ENCODE measurements at regions of chr9 and their contacts with region 1.

Region 1: DNA sequence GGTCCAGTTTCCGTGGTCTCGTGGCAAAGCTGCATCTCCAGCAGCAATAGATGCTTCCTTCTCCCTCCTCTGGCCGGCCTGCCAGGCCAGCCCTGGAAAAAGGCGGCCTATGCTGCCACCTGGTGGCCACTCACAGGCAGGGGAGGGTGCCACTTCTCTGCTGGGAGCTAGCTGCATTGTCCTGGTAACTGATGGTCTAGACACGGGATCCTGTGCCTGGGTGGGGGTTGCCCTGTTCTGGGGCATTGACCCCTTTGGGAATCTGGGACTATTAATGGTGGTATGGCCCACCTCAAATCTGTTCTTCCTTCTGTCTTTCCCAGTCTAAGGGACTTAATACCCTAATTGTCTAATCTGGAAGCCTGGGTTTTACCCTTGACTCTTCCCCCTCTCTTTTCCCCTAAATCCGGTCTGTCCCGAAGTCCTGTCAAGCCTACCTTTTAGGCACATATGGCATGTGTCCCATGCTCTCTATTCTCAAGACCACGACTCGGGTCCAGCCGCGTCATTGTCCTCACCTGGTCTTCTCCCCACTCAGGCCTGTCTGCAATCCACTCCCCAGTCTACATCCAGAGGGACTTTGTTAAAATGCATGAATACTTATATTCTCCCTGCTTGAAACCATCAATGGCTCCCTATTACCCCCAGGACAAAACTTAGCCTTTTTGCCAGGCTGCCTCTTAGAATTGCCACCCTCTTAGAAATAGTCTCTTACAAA is 20.0 kb upstream of the PTGS1 start:
- DNase-seq: peak; percentile 65
- ATAC-seq: peak; percentile 91
- H3K4me3 ChIP-seq: no peak overlapping the region
- H3K27ac ChIP-seq: no peak overlapping the region
- H3K4me1 ChIP-seq: peaks cover 6% of the 10 kb centered on the region
- H3K27me3 ChIP-seq: no peaks in the 10 kb centered on the region
- CTCF ChIP-seq: peak; percentile 99
- POLR2A ChIP-seq: 0 out of 2 replicates have a peak, but pooled peaks have one; percentile 42
- RAD21 ChIP-seq: peak; percentile 99

Region 2: GRCh38 chr9:122092611-122093506 is 257.9 kb before region 1 on chr9 and contains the start of gene TTLL11:
- CTCF ChIA-PET with region 1: interaction called, 19 read pairs
- POLR2A ChIA-PET with region 1: no interaction called
- dilution Hi-C with region 1: no loop called
- in situ Hi-C with region 1: loop called (anchors 10 kb)
- intact Hi-C with region 1: loop called (anchors 1 kb)
- DNase-seq: peak; percentile 91
- ATAC-seq: peak; percentile 89
- H3K4me3 ChIP-seq: peak within 1 kb of the TSS; percentile 56
- H3K27ac ChIP-seq: peak within 1 kb of the TSS; percentile 46
- H3K4me1 ChIP-seq: peaks cover 9% of the 10 kb centered on the region
- H3K27me3 ChIP-seq: no peaks in the 10 kb centered on the region; the same call in none of the 2 replicates
- CTCF ChIP-seq: no peak
- POLR2A ChIP-seq: no peak
- RAD21 ChIP-seq: no peak
- total RNA-seq, gene TTLL11: 2.0 and 2.5 TPM in 2 replicates

Region 3: GRCh38 chr9:122125158-122125508 is 225.7 kb before region 1 on chr9:
- CTCF ChIA-PET with region 1: interaction called, 43 read pairs
- POLR2A ChIA-PET with region 1: interaction called, 5 read pairs
- dilution Hi-C with region 1: no loop called
- in situ Hi-C with region 1: loop called (anchors 5 kb)
- intact Hi-C with region 1: loop called (anchors 1 kb)
- DNase-seq: peak; percentile 76
- ATAC-seq: peak; percentile 79
- H3K4me3 ChIP-seq: no peak overlapping the region
- H3K27ac ChIP-seq: no peak overlapping the region
- H3K4me1 ChIP-seq: peaks cover 13% of the 10 kb centered on the region
- H3K27me3 ChIP-seq: no peaks in the 10 kb centered on the region; the same call in 1 of the 2 replicates
- CTCF ChIP-seq: peak; percentile 99
- POLR2A ChIP-seq: peak; percentile 70; the same call in 1 of the 2 replicates
- RAD21 ChIP-seq: peak; percentile 99

Region 4: DNA sequence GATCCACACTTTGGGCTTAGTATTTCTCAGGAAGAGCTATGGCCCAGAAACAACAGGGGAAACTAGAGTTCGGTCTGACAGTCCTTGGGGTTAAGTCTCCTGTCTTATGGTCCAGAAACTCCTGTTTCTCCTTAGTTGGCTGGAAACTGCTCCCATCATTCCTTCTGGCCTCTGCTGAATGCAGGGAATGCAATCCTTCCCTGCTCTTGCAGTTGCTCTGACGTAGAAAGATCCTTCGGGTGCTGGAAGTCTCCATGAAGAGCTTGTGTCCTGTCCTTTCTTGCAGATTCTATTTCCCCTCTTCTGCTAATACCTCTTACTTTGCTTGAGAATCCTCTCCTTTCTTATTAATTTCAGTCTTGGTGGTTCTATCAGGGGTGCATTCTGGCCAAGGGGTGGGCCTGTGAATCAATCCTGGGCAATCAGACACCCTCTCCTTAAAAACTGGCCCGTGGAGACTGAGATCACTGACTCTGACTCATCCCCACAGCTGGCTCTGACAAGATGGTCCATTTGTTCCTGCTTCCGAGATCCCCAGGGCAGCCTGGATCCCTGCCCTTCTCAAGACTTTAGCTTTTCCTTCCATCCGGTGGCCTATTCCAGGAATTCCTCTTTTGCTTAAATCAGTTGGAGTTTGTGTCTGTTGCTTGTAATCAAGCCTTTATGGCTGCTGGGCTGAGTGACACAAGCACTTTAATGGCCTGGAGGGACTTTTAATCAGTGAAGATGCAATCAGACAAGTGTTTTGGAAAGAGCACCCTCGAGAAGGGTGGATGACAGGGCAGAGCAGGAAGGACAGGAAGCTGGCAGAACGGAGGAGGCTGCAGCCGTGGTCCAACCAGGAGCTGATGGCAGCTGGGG is 43.7 kb after region 1 on chr9:
- CTCF ChIA-PET with region 1: interaction called, 4 read pairs
- POLR2A ChIA-PET with region 1: no interaction called
- dilution Hi-C with region 1: no loop called
- in situ Hi-C with region 1: no loop called
- intact Hi-C with region 1: loop called (anchors 1 kb)
- DNase-seq: peak; percentile 95
- ATAC-seq: peak; percentile 87
- H3K4me3 ChIP-seq: no peak overlapping the region
- H3K27ac ChIP-seq: peak overlapping the region; percentile 84
- H3K4me1 ChIP-seq: peaks cover 19% of the 10 kb centered on the region
- H3K27me3 ChIP-seq: no peaks in the 10 kb centered on the region
- CTCF ChIP-seq: no peak
- POLR2A ChIP-seq: no peak; the same call in 1 of the 2 replicates
- RAD21 ChIP-seq: no peak

Region 5: DNA sequence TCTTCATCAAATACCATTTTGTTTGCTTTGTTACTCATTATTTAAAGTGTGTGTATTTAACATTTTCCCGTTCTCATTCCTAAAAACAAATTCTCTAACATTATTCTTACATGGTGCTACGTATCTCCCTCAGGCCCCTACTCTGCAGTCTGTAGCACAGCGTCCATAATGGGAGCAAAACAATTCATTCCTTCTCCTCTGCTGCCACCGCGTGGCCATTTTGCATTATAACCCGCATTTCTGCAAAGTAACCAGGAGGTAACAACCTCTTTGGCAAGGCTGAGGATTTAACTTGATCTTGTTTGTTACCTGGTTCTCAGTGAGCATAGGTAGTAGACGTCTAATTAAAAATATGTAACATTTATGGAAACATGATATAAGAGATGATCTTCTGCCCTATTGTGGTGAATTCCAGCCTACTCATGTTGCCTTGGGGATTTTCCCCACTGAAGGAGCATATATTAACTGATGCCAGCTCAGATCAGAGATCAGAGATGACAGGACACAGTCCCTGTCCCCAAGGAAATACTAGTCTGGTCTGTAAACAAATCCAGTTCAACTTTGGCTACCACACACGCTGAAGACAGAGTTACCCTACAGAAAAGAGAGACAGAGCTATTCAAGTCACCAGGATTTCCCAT is 459.6 kb after region 1 on chr9:
- CTCF ChIA-PET with region 1: interaction called, 3 read pairs
- POLR2A ChIA-PET with region 1: no interaction called
- dilution Hi-C with region 1: no loop called
- in situ Hi-C with region 1: no loop called
- intact Hi-C with region 1: loop called (anchors 1 kb)
- DNase-seq: peak; percentile 74
- ATAC-seq: peak; percentile 96
- H3K4me3 ChIP-seq: no peak overlapping the region
- H3K27ac ChIP-seq: no peak overlapping the region
- H3K4me1 ChIP-seq: no peaks in the 10 kb centered on the region
- H3K27me3 ChIP-seq: no peaks in the 10 kb centered on the region
- CTCF ChIP-seq: peak; percentile 87
- POLR2A ChIP-seq: no peak
- RAD21 ChIP-seq: peak; percentile 94

Measured in IMR-90 (cell line).